H1 (cell line): ENCODE measurements at regions of chr10 and their contacts with region 1.

Region 1: DNA sequence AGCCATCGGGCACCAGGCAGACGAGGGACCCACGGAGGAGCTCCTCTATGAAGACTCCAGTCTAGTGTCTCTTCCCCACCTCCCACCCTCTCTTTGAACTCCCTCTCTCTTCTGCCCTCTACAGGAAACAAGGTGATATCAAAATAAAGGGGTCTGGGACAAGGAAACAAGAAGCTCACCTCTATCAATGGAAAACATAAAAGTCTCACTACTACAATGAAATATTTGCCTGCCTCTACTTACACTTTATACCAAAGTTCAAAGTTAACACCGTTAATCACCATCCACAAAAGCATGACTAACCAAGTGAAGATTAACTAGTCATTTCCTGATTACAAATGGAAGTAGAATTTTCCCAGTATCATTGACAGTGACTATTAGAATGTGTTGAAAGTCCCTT is 82.2 kb downstream of the PARD3 start:
- DNase-seq: no peak
- H3K4me3 ChIP-seq: no peak overlapping the region
- H3K27ac ChIP-seq: no peak overlapping the region
- H3K4me1 ChIP-seq: peaks cover 8 to 11% (median 9%) of the 10 kb centered on the region in 4 experiments
- H3K27me3 ChIP-seq: no peaks in the 10 kb centered on the region
- CTCF ChIP-seq: peak in 2 of 3 experiments; percentile 34 to 62; a peak in 2 of 4 replicates
- EP300 ChIP-seq: no peak
- POLR2A ChIP-seq: no peak
- RAD21 ChIP-seq: peak; percentile 38 to 55

Region 2: DNA sequence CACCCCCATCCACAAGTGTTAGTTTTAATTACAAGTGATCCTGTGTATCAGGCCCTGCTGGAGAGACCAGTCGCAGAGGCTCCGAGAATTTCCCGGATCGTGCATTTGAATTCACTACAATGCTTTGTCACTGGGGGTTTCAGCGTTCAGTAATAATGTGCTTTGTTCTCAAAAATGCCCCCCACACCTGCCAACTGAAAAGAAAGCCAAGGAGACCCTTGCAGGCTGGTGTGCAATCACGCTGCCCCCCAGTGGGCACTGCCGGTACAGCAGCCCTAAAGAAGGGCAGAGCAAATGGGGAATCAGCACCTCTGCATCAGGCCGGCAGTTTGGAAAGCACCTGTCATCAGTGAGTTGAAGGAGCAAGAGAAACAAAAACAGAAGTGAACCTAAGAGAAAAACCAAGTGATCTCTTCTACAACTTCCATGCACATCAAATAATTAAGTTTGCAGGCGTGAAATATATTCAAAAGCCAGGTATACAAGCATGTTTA is 95.5 kb before region 1 on chr10:
- CTCF ChIA-PET with region 1: no interaction called
- POLR2A ChIA-PET with region 1: no interaction called
- DNase-seq: peak; percentile 62 to 98
- H3K4me3 ChIP-seq: no peak overlapping the region
- H3K27ac ChIP-seq: no peak overlapping the region
- H3K4me1 ChIP-seq: peaks cover 5 to 15% (median 11%) of the 10 kb centered on the region in 4 experiments; a peak in 5 of 7 replicates
- H3K27me3 ChIP-seq: no peaks in the 10 kb centered on the region
- CTCF ChIP-seq: peak; percentile 88 to 98 (median 95)
- EP300 ChIP-seq: peak in 1 of 2 experiments; percentile 66; a peak in 1 of 3 replicates
- POLR2A ChIP-seq: no peak
- RAD21 ChIP-seq: peak; percentile 91 to 92

Region 3: DNA sequence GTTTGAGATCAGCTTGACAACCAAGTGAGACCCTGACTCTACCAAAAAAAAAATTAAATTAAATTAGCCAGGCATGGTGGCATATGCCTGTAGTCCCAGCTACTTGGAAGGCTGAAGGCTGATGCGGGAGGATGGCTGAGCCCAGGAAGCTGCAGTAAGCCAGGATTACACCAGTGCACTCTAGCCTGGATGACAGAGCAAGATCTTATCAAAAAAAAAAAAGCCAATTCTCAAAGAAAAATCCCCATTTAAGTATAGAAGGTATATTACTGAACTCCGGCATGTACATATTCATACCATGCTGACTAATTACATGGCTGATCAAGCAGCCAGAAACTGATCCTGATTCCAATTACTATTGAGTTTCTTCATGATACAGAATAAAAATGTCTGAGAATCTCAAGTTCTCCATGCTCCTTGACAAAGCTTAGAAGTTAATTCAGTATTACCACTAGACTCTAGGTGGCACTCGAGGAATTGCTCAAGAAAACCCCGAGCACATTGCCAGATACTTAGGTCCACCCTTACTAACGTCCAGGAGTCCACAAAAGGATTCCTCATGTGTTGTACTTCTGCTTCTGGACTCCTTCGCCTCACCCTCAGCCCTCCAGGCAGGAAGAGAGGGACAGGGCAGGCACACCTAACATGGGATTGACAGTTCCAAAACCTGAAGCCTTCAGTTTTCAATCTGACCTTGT is 66.8 kb before region 1 on chr10:
- CTCF ChIA-PET with region 1: interaction called, 13 read pairs
- POLR2A ChIA-PET with region 1: no interaction called
- DNase-seq: no peak
- H3K4me3 ChIP-seq: no peak overlapping the region
- H3K27ac ChIP-seq: no peak overlapping the region
- H3K4me1 ChIP-seq: peaks cover 0 to 5% (median under 1%) of the 10 kb centered on the region in 4 experiments; a peak in 2 of 7 replicates
- H3K27me3 ChIP-seq: no peaks in the 10 kb centered on the region
- CTCF ChIP-seq: peak in 2 of 3 experiments; percentile 36 to 38; a peak in 2 of 4 replicates
- EP300 ChIP-seq: no peak
- POLR2A ChIP-seq: no peak
- RAD21 ChIP-seq: peak; percentile 47 to 65

Region 4: DNA sequence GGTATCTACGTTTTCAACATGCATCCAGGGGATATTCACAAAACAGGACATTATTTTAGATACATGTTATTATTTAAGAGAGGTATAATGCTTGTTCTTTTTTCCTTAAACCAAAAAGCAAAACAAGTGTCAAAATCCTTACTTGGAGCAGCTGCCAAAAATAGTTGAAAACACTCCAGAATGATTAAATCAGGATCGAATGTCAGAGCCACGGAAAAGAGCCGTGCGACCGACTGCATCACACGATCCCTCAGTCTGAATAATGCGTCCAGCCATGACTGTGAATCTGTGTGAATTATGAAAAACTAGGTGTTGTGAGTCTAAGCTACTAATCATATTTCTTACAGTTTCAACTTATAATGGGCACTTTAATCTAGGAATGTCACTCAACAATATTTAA is 43.9 kb before region 1 on chr10:
- CTCF ChIA-PET with region 1: interaction called, 29 read pairs
- POLR2A ChIA-PET with region 1: no interaction called
- DNase-seq: no peak
- H3K4me3 ChIP-seq: no peak overlapping the region
- H3K27ac ChIP-seq: no peak overlapping the region
- H3K4me1 ChIP-seq: peaks cover 0 to 5% (median 2%) of the 10 kb centered on the region in 4 experiments; a peak in 3 of 7 replicates
- H3K27me3 ChIP-seq: no peaks in the 10 kb centered on the region
- CTCF ChIP-seq: no peak
- EP300 ChIP-seq: no peak
- POLR2A ChIP-seq: no peak
- RAD21 ChIP-seq: no peak

Region 5: GRCh38 chr10:34766266-34766600 is 33.3 kb after region 1 on chr10:
- CTCF ChIA-PET with region 1: interaction called, 31 read pairs
- POLR2A ChIA-PET with region 1: no interaction called
- DNase-seq: no peak
- H3K4me3 ChIP-seq: no peak overlapping the region
- H3K27ac ChIP-seq: no peak overlapping the region
- H3K4me1 ChIP-seq: peaks cover 7 to 19% (median 14%) of the 10 kb centered on the region in 4 experiments
- H3K27me3 ChIP-seq: no peaks in the 10 kb centered on the region
- CTCF ChIP-seq: no peak
- EP300 ChIP-seq: no peak
- POLR2A ChIP-seq: no peak
- RAD21 ChIP-seq: no peak

Region 6: GRCh38 chr10:34815185-34816084 is 82.5 kb after region 1 on chr10 and contains the start of gene PARD3:
- CTCF ChIA-PET with region 1: interaction called, 12 read pairs
- POLR2A ChIA-PET with region 1: interaction called, 3 read pairs
- DNase-seq: peak in 1 of 2 experiments; percentile 76
- H3K4me3 ChIP-seq: peak within 1 kb of the TSS; percentile 80 to 98 (median 82)
- H3K27ac ChIP-seq: peak within 1 kb of the TSS; percentile 66
- H3K4me1 ChIP-seq: peaks cover 6 to 17% (median 14%) of the 10 kb centered on the region in 4 experiments
- H3K27me3 ChIP-seq: peaks cover 0 to 20% (median 14%) of the 10 kb centered on the region in 4 experiments; a peak in 5 of 7 replicates
- CTCF ChIP-seq: peak in 1 of 3 experiments; percentile 2; a peak in 1 of 4 replicates
- EP300 ChIP-seq: no peak
- POLR2A ChIP-seq: peak in 1 of 2 experiments; percentile 49; a peak in 1 of 3 replicates
- RAD21 ChIP-seq: no peak
- total RNA-seq, gene PARD3: 47.9 and 49.1 TPM in 2 replicates